Uterus (tissue), 4 donors: ENCODE measurements at regions of chr22 and their contacts with region 1.

Region 1: GRCh38 chr22:43273902-43274484 is 69.2 kb downstream of the SCUBE1 start:
- DNase-seq: peak; percentile 35 to 50
- H3K4me3 ChIP-seq: no peak overlapping the region
- H3K27ac ChIP-seq: no peak overlapping the region
- H3K4me1 ChIP-seq: no peaks in the 10 kb centered on the region
- H3K27me3 ChIP-seq: no peaks in the 10 kb centered on the region
- CTCF ChIP-seq: peak; percentile 62 to 89 (median 73)
- POLR2A ChIP-seq: no peak

Region 2: GRCh38 chr22:43343262-43343669 is 69.3 kb after region 1 on chr22 and contains the start of gene SCUBE1:
- intact Hi-C with region 1: loop called (anchors 5 kb)
- DNase-seq: peak in 1 of 2 donors; percentile 42
- H3K4me3 ChIP-seq: peak within 1 kb of the TSS in 1 of 2 donors; percentile 35
- H3K27ac ChIP-seq: no peak within 1 kb of the TSS
- H3K4me1 ChIP-seq: peaks cover 0 to 13% of the 10 kb centered on the region in 2 donors
- H3K27me3 ChIP-seq: peaks cover 0 to 16% of the 10 kb centered on the region in 2 donors
- CTCF ChIP-seq: no peak
- POLR2A ChIP-seq: no peak
- total RNA-seq, gene SCUBE1: 0.14 to 1.7 (median 0.26) TPM in 3 of 4 donors, not detected in the other

Region 3: GRCh38 chr22:43385770-43386641 is 112.0 kb after region 1 on chr22:
- intact Hi-C with region 1: loop called (anchors 10 kb)
- DNase-seq: peak; percentile 49 to 78
- H3K4me3 ChIP-seq: no peak overlapping the region
- H3K27ac ChIP-seq: no peak overlapping the region
- H3K4me1 ChIP-seq: no peaks in the 10 kb centered on the region
- H3K27me3 ChIP-seq: no peaks in the 10 kb centered on the region
- CTCF ChIP-seq: peak; percentile 78 to 90 (median 86)
- POLR2A ChIP-seq: no peak

Region 4: GRCh38 chr22:43399338-43399979 is 125.5 kb after region 1 on chr22:
- intact Hi-C with region 1: no loop called
- DNase-seq: no peak
- H3K4me3 ChIP-seq: no peak overlapping the region
- H3K27ac ChIP-seq: no peak overlapping the region
- H3K4me1 ChIP-seq: no peaks in the 10 kb centered on the region
- H3K27me3 ChIP-seq: no peaks in the 10 kb centered on the region
- CTCF ChIP-seq: no peak
- POLR2A ChIP-seq: no peak